RWPE1 (cell line): ENCODE measurements at regions of chr12 and their contacts with region 1.

Region 1: DNA sequence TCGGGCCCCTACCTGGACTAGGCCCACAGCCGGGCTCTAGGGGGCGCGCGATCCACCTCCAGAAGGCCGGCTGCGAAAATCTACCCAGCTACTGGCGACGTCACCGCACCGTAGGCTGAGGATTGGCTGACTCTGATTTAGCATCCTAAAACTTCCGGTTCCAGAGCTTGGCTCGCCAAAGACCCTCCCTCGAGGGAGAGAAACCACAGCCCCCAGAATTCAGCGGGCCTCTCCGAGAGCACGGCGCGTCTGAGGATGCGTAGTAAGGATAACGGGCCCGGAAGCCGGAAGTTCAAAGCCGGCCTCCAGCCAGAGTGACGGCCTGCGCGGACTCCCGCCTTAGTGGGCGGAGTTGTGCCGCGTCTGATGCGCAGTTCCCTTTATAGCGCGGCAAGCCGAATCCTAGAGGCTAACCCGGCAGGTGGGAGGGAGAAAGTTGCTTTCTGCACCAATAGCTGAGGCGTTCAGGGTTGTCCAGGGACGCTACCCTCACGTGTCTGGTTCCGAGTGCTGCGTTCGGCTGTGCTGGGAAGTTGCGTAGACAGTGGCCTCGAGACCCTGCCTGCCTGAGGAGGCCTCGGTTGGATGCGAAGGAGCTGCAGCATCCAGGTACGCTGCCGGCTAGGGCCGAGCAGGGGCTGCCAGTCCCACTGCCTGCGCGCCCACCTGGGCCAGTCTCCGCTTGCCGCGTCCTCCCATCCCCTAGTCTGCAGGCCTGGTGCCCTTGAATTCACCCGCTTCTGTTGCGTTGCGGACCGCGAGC is at the start of gene COX14:
- DNase-seq: peak; percentile 99
- H3K27ac ChIP-seq: peak within 1 kb of the TSS; percentile 92
- CTCF ChIP-seq: peak; percentile 98

Region 2: GRCh38 chr12:49903695-49904423 is 208.0 kb before region 1 on chr12 and contains the start of gene FAIM2:
- CTCF ChIA-PET with region 1: no interaction called
- POLR2A ChIA-PET with region 1: no interaction called
- DNase-seq: no peak
- H3K27ac ChIP-seq: no peak within 1 kb of the TSS
- CTCF ChIP-seq: no peak

Region 3: GRCh38 chr12:50090391-50090790 is 21.5 kb before region 1 on chr12:
- CTCF ChIA-PET with region 1: interaction called, 18 read pairs
- POLR2A ChIA-PET with region 1: interaction called, 3 read pairs
- DNase-seq: no peak
- H3K27ac ChIP-seq: no peak overlapping the region
- CTCF ChIP-seq: no peak

Region 4: DNA sequence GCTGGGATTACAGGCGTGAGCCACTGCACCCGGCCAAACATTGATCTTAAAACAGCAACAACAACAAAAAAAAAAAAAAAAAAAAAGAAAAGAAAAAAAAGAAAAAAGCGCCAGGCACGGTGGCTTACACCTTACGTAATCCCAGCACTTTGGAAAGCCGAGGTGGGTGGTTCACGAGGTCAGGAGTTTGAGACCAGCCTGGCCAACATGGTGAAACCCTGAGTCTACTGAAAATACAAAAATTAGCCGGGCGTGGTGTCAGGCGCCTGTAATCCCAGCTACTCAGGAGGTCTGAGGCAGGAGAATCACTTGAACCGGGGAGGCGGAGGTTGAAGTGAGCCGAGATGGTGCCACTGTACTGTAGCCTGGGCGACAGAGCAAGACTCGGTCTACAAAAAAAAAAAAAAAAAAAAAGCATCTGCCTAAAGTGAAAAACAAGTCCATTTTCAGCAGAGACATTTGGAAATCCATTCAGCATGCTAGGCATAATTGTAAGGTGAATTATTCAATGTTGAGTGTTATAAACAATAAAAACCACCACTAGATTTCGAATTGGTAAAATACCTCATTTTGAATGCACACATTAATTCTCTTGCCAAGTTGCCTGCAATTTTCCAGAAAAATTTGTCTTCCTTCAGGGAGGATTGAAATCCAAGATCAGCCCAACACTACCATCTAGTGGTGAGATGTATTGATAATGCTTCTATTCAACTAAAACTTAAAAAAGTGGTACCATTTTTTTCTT is 63.3 kb after region 1 on chr12:
- CTCF ChIA-PET with region 1: interaction called, 13 read pairs
- POLR2A ChIA-PET with region 1: interaction called, 5 read pairs
- DNase-seq: peak; percentile 29
- H3K27ac ChIP-seq: no peak overlapping the region
- CTCF ChIP-seq: peak; percentile 71

Region 5: GRCh38 chr12:50394469-50395025 is 282.7 kb after region 1 on chr12:
- CTCF ChIA-PET with region 1: no interaction called
- POLR2A ChIA-PET with region 1: interaction called, 12 read pairs
- DNase-seq: no peak
- H3K27ac ChIP-seq: no peak overlapping the region
- CTCF ChIP-seq: no peak

Region 6: DNA sequence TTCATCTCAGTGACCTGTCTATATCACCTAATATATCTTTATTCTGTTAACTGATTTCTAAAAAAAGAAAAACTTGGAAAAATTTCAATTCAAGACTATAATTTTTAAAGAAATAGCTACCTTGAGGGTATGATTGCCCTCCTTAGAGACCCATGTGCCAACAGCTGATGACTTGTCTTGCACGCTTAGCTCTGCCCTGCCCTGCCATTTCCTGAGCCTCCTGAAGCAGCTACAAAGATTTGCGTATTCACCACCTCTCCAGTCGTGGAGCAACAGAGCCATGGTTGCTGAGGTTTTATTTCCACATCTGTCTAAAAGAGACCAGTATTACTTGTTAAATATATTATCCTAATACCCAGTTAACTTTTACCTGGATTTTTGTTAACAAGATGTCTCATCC is 560.3 kb after region 1 on chr12:
- CTCF ChIA-PET with region 1: no interaction called
- POLR2A ChIA-PET with region 1: no interaction called
- DNase-seq: no peak
- H3K27ac ChIP-seq: no peak overlapping the region
- CTCF ChIP-seq: no peak